CD14-positive monocyte (primary cell): ENCODE measurements at regions of chr20 and their contacts with region 1.

Region 1: GRCh38 chr20:48706173-48707015 is 121.4 kb downstream of the PREX1 start:
- DNase-seq: no peak
- H3K4me3 ChIP-seq: no peak overlapping the region
- H3K4me3 Mint-ChIP-seq: no peak overlapping the region
- H3K27ac ChIP-seq: peak overlapping the region in 1 of 2 donors; percentile 64
- H3K27ac Mint-ChIP-seq: peak overlapping the region in 5 of 7 donors; percentile 31 to 83 (median 68)
- H3K4me1 ChIP-seq: peaks cover 24 to 40% of the 10 kb centered on the region in 2 donors
- H3K4me1 Mint-ChIP-seq: peaks cover 54% of the 10 kb centered on the region
- H3K27me3 ChIP-seq: no peaks in the 10 kb centered on the region
- H3K27me3 Mint-ChIP-seq: peaks cover 0 to 2% (median 2%) of the 10 kb centered on the region in 3 donors
- CTCF ChIP-seq: no peak

Region 2: GRCh38 chr20:48769069-48769879 is 62.9 kb after region 1 on chr20:
- intact Hi-C with region 1: loop called in 1 of 2 experiments (anchors 5 kb)
- DNase-seq: peak; percentile 88 to 95 (median 92)
- H3K4me3 ChIP-seq: no peak overlapping the region
- H3K4me3 Mint-ChIP-seq: peak overlapping the region in 1 of 2 donors; percentile 47
- H3K27ac ChIP-seq: peak overlapping the region; percentile 37 to 94
- H3K27ac Mint-ChIP-seq: peak overlapping the region; percentile 71 to 99 (median 85)
- H3K4me1 ChIP-seq: peaks cover 93 to 99% of the 10 kb centered on the region in 2 donors
- H3K4me1 Mint-ChIP-seq: peaks cover 99% of the 10 kb centered on the region
- H3K27me3 ChIP-seq: no peaks in the 10 kb centered on the region
- H3K27me3 Mint-ChIP-seq: no peaks in the 10 kb centered on the region
- CTCF ChIP-seq: no peak

Region 3: DNA sequence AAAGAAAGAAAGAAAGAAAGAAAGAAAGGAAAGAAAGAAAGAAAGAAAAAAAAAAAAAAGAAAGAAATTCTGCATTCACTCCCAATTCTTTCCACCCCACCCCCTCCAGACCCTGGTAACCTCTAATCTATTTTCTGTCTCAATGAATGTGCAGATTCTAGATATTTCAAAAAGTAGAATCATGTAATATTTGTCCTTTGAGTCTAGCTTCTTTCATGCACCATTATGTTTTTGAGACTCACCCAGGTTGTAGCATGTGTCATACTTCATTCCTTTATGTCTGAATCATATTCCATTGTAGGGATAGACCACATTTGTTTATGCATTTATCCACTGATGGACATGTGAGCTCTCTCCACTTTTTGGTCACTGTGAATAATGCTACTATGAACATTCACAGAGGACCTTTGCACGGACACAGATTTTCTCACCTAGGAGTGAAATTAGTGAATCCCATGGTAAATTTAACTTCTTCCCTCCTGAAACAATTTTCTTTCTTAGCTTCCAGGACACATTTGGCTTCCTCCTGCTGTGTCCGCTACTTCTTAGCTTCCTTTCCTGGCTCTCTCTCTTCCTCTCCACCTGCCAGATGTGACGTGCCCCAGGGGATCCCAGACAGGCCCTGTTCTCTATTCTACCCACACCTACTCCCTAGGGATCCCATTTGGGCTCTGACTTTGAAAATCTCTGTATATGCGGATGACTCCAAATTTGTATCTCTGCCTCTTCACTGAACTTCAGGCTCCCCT is 191.0 kb after region 1 on chr20:
- intact Hi-C with region 1: loop called in 1 of 2 experiments (anchors 10 kb)
- DNase-seq: no peak
- H3K4me3 ChIP-seq: no peak overlapping the region
- H3K4me3 Mint-ChIP-seq: no peak overlapping the region
- H3K27ac ChIP-seq: no peak overlapping the region
- H3K27ac Mint-ChIP-seq: no peak overlapping the region
- H3K4me1 ChIP-seq: peaks cover 25 to 30% of the 10 kb centered on the region in 2 donors
- H3K4me1 Mint-ChIP-seq: peaks cover 38% of the 10 kb centered on the region
- H3K27me3 ChIP-seq: no peaks in the 10 kb centered on the region
- H3K27me3 Mint-ChIP-seq: peaks cover 0 to 5% (median 2%) of the 10 kb centered on the region in 3 donors
- CTCF ChIP-seq: no peak